Gastrocnemius medialis (tissue), 4 donors: ENCODE measurements at regions of chr19 and their contacts with region 1.

Region 1: GRCh38 chr19:4457654-4458395 is at the start of gene UBXN6:
- DNase-seq: peak; percentile 96 to 97
- ATAC-seq: peak; percentile 86
- H3K4me3 ChIP-seq: peak within 1 kb of the TSS; percentile 56 to 90 (median 68)
- H3K27ac ChIP-seq: peak within 1 kb of the TSS; percentile 90 to 99 (median 95)
- H3K4me1 ChIP-seq: peaks cover 24 to 29% of the 10 kb centered on the region in 2 donors
- H3K27me3 ChIP-seq: no peaks in the 10 kb centered on the region
- CTCF ChIP-seq: peak in 2 of 5 experiments; percentile 8 to 34
- POLR2A ChIP-seq: no peak
- total RNA-seq, gene UBXN6: 93.8 to 230 (median 114) TPM

Region 2: GRCh38 chr19:3024870-3025550 is 1432.8 kb before region 1 on chr19:
- in situ Hi-C with region 1: no loop called
- intact Hi-C with region 1: no loop called
- DNase-seq: no peak
- ATAC-seq: no peak
- H3K4me3 ChIP-seq: no peak overlapping the region
- H3K27ac ChIP-seq: no peak overlapping the region
- H3K4me1 ChIP-seq: peaks cover 0 to 10% of the 10 kb centered on the region in 2 donors
- H3K27me3 ChIP-seq: no peaks in the 10 kb centered on the region
- CTCF ChIP-seq: no peak
- POLR2A ChIP-seq: no peak

Region 3: GRCh38 chr19:4246767-4247593 is 210.8 kb before region 1 on chr19 and contains the start of gene YJU2:
- in situ Hi-C with region 1: no loop called
- intact Hi-C with region 1: loop called (anchors 2 kb)
- DNase-seq: peak; percentile 98 to 99
- ATAC-seq: peak; percentile 99
- H3K4me3 ChIP-seq: peak within 1 kb of the TSS; percentile 57 to 87 (median 76)
- H3K27ac ChIP-seq: peak within 1 kb of the TSS; percentile 85 to 99 (median 95)
- H3K4me1 ChIP-seq: peaks cover 7 to 11% of the 10 kb centered on the region in 2 donors
- H3K27me3 ChIP-seq: peaks cover 0 to 3% (median 0%) of the 10 kb centered on the region in 3 donors
- CTCF ChIP-seq: peak in 4 of 5 experiments; percentile 23 to 38 (median 34)
- POLR2A ChIP-seq: peak; percentile 36 to 42
- total RNA-seq, gene YJU2: 13.5 to 37.8 (median 19.9) TPM

Region 4: GRCh38 chr19:4380254-4380727 is 77.5 kb before region 1 on chr19:
- in situ Hi-C with region 1: no loop called
- intact Hi-C with region 1: no loop called
- DNase-seq: no peak
- ATAC-seq: no peak
- H3K4me3 ChIP-seq: no peak overlapping the region
- H3K27ac ChIP-seq: peak overlapping the region; percentile 67 to 95 (median 79)
- H3K4me1 ChIP-seq: peaks cover 50 to 56% of the 10 kb centered on the region in 2 donors
- H3K27me3 ChIP-seq: no peaks in the 10 kb centered on the region
- CTCF ChIP-seq: no peak
- POLR2A ChIP-seq: no peak

Region 5: DNA sequence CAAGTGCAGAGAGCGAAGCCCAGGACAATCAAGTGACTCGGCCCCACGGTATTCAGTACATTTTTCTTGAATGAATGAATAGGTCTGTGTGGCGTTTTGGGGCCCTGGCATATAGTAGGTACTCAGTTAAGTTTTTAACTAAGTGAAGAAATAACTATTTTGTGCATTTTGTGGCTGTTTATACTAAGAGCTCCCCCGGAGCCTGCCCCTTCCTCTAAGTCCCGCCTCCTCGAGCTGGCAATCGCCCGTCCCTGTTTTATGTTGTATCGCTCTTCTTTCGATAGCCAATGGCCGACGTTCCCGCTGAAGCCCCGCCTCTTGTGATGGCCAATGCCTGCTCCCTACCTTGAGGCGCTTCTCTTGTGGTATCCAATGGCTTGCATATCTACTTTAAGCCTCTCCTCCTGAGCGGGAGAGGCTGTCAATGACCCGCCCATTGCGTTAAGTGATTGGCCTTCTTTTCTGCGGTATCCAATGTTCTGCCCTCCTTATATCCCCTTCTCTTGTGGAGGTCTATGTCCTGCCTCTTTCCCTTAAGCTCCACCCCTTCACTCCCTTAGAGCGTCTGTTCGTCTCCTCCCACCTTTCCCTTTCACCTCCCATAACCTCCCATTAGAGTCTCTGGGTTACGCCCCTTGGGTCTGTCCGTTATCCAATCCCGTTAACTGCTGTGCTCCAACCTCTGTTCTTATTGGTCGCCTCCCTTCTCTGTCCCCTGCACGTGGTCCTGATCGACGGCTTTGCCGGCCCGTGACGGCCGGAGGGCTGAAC is 13.8 kb after region 1 on chr19:
- in situ Hi-C with region 1: no loop called
- intact Hi-C with region 1: loop called (anchors 1 kb)
- DNase-seq: peak; percentile 99 to 100
- ATAC-seq: peak; percentile 96 to 97
- H3K4me3 ChIP-seq: peak overlapping the region; percentile 57 to 85 (median 76)
- H3K27ac ChIP-seq: peak overlapping the region; percentile 80 to 95 (median 90)
- H3K4me1 ChIP-seq: peaks cover 16 to 18% of the 10 kb centered on the region in 2 donors
- H3K27me3 ChIP-seq: no peaks in the 10 kb centered on the region
- CTCF ChIP-seq: no peak
- POLR2A ChIP-seq: peak; percentile 45 to 84